Mammary epithelial cell (primary cell): ENCODE measurements at regions of chr1 and their contacts with region 1.

Region 1: DNA sequence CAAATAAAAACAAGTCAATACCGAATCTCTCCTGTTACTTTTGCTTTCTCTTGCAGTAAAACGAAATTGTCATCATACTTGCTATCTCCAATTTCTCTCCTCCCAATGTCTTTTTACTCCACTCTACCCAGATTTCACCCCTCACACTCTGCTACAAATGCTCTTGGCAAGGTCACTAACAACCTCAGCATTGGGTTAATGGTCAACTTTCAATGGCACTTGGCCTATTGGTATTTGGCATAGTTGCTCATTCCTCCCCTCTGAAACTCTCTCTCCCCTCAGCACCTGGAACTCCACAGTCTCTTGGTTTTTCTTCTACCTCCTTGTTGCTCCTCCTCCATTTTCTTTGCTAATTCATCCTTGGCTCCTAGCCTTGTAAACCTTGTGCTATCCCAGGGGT is 367.3 kb downstream of the PTPRU start:
- DNase-seq: no peak
- H3K4me3 ChIP-seq: no peak overlapping the region
- H3K27ac ChIP-seq: no peak overlapping the region
- H3K4me1 ChIP-seq: no peaks in the 10 kb centered on the region
- H3K27me3 ChIP-seq: no peaks in the 10 kb centered on the region
- CTCF ChIP-seq: no peak

Region 2: GRCh38 chr1:29527314-29528004 is 76.2 kb before region 1 on chr1:
- CTCF ChIA-PET with region 1: no interaction called
- dilution Hi-C with region 1: loop called (anchors 5 kb)
- in situ Hi-C with region 1: no loop called
- intact Hi-C with region 1: no loop called
- DNase-seq: no peak
- H3K4me3 ChIP-seq: no peak overlapping the region
- H3K27ac ChIP-seq: no peak overlapping the region
- H3K4me1 ChIP-seq: no peaks in the 10 kb centered on the region
- H3K27me3 ChIP-seq: no peaks in the 10 kb centered on the region
- CTCF ChIP-seq: no peak

Region 3: GRCh38 chr1:29563571-29563970 is 40.1 kb before region 1 on chr1:
- CTCF ChIA-PET with region 1: no interaction called
- dilution Hi-C with region 1: loop called (anchors 5 kb)
- in situ Hi-C with region 1: no loop called
- intact Hi-C with region 1: no loop called
- DNase-seq: peak; percentile 24
- H3K4me3 ChIP-seq: no peak overlapping the region
- H3K27ac ChIP-seq: no peak overlapping the region
- H3K4me1 ChIP-seq: peaks cover 11% of the 10 kb centered on the region
- H3K27me3 ChIP-seq: no peaks in the 10 kb centered on the region
- CTCF ChIP-seq: no peak

Region 4: DNA sequence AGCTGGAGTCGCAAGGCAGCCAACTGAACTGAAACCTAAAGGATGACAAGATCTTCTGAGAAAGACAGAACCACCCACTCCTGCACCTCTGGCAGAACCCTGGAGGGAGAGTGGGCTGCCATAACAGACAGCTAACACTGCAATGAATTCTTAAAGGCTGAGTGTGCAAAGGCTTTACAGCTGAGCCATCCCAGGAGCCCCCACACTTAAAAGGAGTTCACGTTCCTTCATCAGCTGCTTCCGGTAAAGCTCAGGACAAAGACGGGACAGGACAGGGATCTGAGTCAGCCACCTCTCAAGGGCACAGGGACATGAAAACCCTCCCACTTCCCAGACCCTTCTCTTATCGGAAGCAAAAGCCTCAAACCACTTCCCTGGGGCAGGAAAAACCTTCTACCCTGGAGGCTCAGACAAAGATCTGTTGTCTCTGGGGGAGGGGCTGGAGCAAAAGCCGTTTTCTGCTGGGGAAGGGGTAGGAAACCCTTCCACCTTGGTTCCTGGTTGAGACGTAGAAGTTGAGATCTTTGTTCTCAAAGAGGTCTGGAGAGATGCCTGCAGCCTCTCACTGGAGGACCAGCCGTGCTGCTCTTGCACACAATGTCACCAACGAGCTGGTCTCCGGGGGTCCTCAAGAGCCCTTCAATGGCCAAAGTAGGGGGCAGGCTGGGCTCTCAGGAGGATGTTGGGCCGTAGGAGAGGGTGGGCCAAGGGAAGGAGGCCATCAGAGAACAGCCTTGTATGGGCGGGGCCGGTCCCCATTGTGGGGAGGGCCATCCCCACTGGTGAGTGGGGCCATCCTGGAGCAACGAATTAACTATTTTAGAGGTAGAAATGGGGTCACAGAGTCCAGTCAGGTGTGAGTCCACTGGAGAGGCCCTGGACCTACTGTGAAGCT is 85.1 kb after region 1 on chr1:
- CTCF ChIA-PET with region 1: no interaction called
- dilution Hi-C with region 1: no loop called
- in situ Hi-C with region 1: no loop called
- intact Hi-C with region 1: no loop called
- DNase-seq: peak; percentile 48
- H3K4me3 ChIP-seq: no peak overlapping the region
- H3K27ac ChIP-seq: no peak overlapping the region
- H3K4me1 ChIP-seq: peaks cover 32% of the 10 kb centered on the region
- H3K27me3 ChIP-seq: no peaks in the 10 kb centered on the region
- CTCF ChIP-seq: no peak